ENCODE measurements at regions of chr14 and their contacts with region 1.

Region 1: DNA sequence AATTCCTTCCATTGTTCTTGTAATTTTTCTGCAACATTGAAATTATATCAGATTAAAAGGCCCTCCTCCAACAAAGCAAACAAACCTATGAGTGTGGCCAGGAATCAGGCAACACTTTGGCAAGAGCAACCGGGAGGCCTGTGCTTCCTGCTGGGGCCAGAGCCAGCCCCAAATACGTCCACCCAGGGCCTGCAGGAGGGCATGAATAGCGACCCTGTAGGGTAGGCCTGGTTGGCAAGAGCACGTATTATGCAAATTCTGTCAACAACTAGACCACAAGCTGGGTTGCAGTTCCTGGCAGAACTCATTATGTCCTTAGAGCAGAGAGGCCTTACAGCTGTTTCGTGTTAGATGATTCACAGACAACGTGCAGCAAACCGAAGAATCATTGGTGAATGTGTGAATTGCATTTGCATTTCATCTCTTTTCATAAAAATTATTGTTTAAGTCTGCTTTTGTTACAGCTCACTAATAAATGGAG is 26.9 kb upstream of the LGALS3 start:
- DNase-seq: peak; percentile 72
- ATAC-seq: peak; percentile 62
- H3K4me3 Mint-ChIP-seq: peak overlapping the region; percentile 49
- H3K27ac Mint-ChIP-seq: peak overlapping the region; percentile 89
- H3K4me1 Mint-ChIP-seq: peaks cover 43% of the 10 kb centered on the region
- H3K27me3 Mint-ChIP-seq: no peaks in the 10 kb centered on the region

Region 2: GRCh38 chr14:55127460-55127951 is 25.3 kb after region 1 on chr14:
- CTCF ChIA-PET with region 1: no interaction called
- POLR2A ChIA-PET with region 1: no interaction called
- intact Hi-C with region 1: loop called in 1 of 2 experiments (anchors 2 kb)
- DNase-seq: no peak
- ATAC-seq: no peak
- H3K4me3 Mint-ChIP-seq: no peak overlapping the region
- H3K27ac Mint-ChIP-seq: no peak overlapping the region
- H3K4me1 Mint-ChIP-seq: peaks cover 6% of the 10 kb centered on the region
- H3K27me3 Mint-ChIP-seq: peaks cover 22% of the 10 kb centered on the region

Region 3: GRCh38 chr14:55309761-55310365 is 207.7 kb after region 1 on chr14:
- CTCF ChIA-PET with region 1: no interaction called
- POLR2A ChIA-PET with region 1: interaction called, 13 read pairs
- intact Hi-C with region 1: no loop called
- DNase-seq: no peak
- ATAC-seq: no peak
- H3K4me3 Mint-ChIP-seq: no peak overlapping the region
- H3K27ac Mint-ChIP-seq: no peak overlapping the region
- H3K4me1 Mint-ChIP-seq: peaks cover 28% of the 10 kb centered on the region
- H3K27me3 Mint-ChIP-seq: no peaks in the 10 kb centered on the region